AG04449 (cell line): ENCODE measurements at regions of chr1 and their contacts with region 1.

Region 1: GRCh38 chr1:110203021-110203661 is 7.0 kb upstream of the KCNC4 start:
- DNase-seq: no peak
- H3K4me3 ChIP-seq: no peak overlapping the region
- CTCF ChIP-seq: peak; percentile 76

Region 2: GRCh38 chr1:110176299-110176956 is 26.7 kb before region 1 on chr1:
- CTCF ChIA-PET with region 1: interaction called, 10 read pairs
- POLR2A ChIA-PET with region 1: no interaction called
- DNase-seq: no peak
- H3K4me3 ChIP-seq: no peak overlapping the region
- CTCF ChIP-seq: no peak

Region 3: GRCh38 chr1:110243574-110243973 is 40.4 kb after region 1 on chr1:
- CTCF ChIA-PET with region 1: interaction called, 28 read pairs
- POLR2A ChIA-PET with region 1: no interaction called
- DNase-seq: no peak
- H3K4me3 ChIP-seq: no peak overlapping the region
- CTCF ChIP-seq: no peak

Region 4: DNA sequence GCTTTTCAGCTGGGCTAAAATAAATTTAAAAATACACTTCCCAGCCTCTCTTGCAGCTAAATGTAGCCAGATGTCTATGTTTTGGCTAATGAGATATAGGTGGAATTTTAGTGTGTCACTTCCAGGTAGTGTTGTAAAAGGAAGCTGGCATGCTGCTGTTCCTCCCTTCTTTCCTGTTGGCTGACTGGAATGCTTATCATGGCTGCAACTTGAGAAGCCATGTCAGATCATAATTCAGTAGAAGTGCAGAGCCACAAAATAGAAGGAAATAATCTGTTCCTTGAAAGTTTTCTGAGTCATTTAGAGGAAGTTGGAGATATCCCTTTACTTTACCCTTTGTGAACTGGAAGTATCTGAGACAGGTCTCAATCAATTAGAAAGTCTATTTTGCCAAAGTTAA is 125.1 kb after region 1 on chr1:
- CTCF ChIA-PET with region 1: interaction called, 150 read pairs
- POLR2A ChIA-PET with region 1: no interaction called
- DNase-seq: no peak
- H3K4me3 ChIP-seq: no peak overlapping the region
- CTCF ChIP-seq: no peak

Region 5: GRCh38 chr1:110393691-110394564 is 190.8 kb after region 1 on chr1:
- CTCF ChIA-PET with region 1: interaction called, 13 read pairs
- POLR2A ChIA-PET with region 1: no interaction called
- DNase-seq: peak; percentile 67
- H3K4me3 ChIP-seq: no peak overlapping the region
- CTCF ChIP-seq: no peak

Region 6: DNA sequence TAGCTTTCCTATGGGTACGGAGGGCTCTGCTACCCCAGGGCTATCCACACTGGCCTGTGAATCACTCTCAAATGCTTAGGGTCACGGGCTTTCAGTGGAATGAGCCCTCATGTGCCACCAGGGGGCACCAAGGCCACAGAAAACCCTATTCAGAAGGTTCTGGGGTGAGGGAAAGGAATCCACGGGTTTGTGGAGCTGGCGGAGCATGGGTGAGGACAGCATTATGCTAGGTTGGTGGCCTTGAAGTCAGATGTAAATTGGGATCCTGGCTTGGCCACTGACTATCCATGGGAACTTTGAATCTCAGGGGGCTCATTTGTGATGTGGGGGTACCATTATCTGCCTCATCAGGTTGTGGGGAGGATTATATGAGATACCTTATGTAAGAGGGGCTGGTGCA is 209.4 kb after region 1 on chr1:
- CTCF ChIA-PET with region 1: interaction called, 41 read pairs
- POLR2A ChIA-PET with region 1: no interaction called
- DNase-seq: no peak
- H3K4me3 ChIP-seq: no peak overlapping the region
- CTCF ChIP-seq: peak; percentile 83